ENCODE measurements at regions of chr12 and their contacts with region 1.

Region 1: DNA sequence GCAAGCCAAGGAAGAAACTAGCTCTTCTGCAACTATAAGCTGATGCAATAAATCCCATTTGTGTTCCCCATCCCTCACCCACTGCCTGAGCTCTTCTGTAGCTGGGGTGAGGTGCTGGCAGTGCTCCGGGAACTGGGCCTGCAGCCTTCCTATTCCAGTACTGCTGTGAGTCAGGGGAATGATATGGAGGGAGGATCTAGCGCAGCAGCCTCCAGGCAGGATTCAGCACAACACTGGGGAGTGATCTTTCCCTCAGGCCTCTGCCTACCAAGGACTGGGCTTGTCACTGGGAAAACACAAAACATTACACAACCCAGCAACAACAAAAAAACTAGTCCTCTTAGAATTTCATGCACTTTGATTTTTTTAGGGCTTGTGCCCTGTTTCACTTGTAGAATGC is 58.7 kb downstream of the ST8SIA1 start:
- DNase-seq: peak; percentile 99
- ATAC-seq: peak; percentile 99
- H3K4me3 ChIP-seq: no peak overlapping the region
- H3K27ac ChIP-seq: peak overlapping the region; percentile 92
- H3K4me1 ChIP-seq: peaks cover 10% of the 10 kb centered on the region
- H3K27me3 ChIP-seq: no peaks in the 10 kb centered on the region
- CTCF ChIP-seq: no peak
- POLR2A ChIP-seq: no peak
- RAD21 ChIP-seq: peak; percentile 21; the same call in 1 of the 2 replicates

Region 2: DNA sequence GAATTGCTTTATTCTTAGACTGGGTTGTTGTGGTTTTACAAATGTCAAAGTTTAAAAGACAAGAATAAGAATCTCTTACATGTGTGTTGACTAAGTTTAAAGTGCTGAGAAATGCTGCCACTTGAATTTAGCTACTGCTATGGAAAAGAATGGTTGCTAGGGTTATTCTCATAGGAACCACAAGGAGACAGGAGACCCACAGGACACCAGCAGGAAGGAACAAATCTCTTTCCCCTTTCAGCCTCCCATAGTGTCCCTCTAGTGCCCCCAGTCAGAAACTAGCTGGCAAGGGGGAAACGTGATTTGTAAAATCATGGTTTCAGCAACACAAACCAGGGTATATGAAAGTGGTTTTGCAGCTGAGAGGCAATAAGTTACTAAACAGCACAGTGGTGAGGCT is 44.0 kb before region 1 on chr12:
- CTCF ChIA-PET with region 1: no interaction called
- POLR2A ChIA-PET with region 1: no interaction called
- dilution Hi-C with region 1: no loop called
- in situ Hi-C with region 1: no loop called
- intact Hi-C with region 1: loop called (anchors 5 kb)
- DNase-seq: no peak
- ATAC-seq: no peak
- H3K4me3 ChIP-seq: no peak overlapping the region
- H3K27ac ChIP-seq: no peak overlapping the region
- H3K4me1 ChIP-seq: peaks cover 15% of the 10 kb centered on the region
- H3K27me3 ChIP-seq: no peaks in the 10 kb centered on the region; the same call in 1 of the 2 replicates
- CTCF ChIP-seq: no peak
- POLR2A ChIP-seq: no peak
- RAD21 ChIP-seq: no peak

Measured in IMR-90 (cell line).